ENCODE measurements at regions of chr1 and their contacts with region 1.

Region 1: DNA sequence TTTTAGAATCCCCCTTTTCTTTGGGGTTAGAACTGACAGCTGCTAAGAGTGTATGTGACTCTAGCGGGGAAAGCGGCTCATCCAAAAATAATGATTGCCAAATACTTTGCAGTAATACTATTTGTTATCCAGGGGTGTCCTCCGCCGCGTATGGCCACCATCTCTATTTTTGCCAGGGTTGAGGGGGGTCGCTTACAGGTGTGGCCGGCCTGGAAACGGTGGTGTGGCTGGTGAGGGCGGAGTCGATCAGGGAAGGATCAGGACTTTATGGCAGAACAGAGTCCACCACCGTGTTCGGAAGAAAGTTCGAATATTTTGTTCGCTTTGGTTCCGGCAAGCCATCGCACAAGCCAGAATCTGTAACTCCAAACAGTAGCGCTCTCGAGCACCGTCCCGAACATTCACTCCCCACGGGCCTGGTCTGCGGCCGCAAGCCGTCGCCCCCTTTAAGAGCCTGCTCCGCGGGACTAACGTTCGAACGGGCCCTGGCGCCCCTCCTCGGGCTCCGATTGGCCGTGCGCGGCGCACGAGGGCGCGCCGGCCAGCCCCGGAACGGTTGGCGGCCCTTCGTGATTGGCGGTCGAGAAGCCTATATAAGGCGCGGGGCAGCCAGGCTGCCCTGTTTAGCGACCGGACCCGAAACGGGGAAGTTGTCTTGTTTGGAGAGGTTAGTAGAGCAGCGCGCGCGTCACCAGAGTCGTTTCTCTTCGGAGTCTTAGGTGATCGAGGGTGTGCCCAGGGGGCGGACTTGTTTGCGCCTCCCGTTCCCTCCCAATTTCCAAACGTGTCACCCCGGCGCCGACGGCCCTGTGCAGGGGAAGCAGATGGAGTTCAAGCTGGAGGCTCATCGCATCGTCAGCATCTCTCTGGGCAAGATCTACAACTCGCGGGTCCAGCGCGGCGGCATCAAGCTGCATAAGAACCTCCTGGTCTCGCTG is at the start of gene IER5:
- DNase-seq: peak; percentile 89 to 98 (median 93)
- H3K4me3 ChIP-seq: peak within 1 kb of the TSS; percentile 88
- H3K4me3 Mint-ChIP-seq: peak within 1 kb of the TSS; percentile 96 to 100 (median 99)
- H3K27ac ChIP-seq: peak within 1 kb of the TSS; percentile 99
- H3K27ac Mint-ChIP-seq: peak within 1 kb of the TSS; percentile 98 to 100 (median 99)
- H3K4me1 ChIP-seq: peaks cover 27% of the 10 kb centered on the region
- H3K4me1 Mint-ChIP-seq: peaks cover 32 to 45% (median 43%) of the 10 kb centered on the region in 3 donors
- H3K27me3 ChIP-seq: no peaks in the 10 kb centered on the region
- H3K27me3 Mint-ChIP-seq: peaks cover 0 to 6% of the 10 kb centered on the region in 2 donors
- total RNA-seq, gene IER5: 52.3 to 57.2 TPM

Region 2: DNA sequence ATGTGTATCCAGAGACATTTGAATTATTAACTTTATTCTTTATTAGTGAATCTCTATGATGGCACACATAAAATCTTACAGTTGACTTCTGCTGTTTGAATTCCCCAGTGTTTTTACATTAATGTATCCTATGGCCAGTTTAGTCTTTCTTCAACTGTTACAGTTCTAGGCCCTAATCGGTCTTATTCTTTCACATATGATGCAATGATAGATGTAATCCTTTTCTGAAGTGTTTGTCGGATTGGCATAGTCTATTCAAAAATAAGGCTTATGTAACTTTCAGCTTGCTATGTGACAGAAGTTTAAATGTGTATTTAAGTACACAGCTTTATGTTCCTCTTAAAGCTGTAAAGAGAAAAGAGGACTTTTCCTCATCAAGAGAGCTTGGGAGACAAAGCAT is 202.0 kb before region 1 on chr1:
- CTCF ChIA-PET with region 1: no interaction called
- POLR2A ChIA-PET with region 1: interaction called, 12 read pairs
- DNase-seq: no peak
- H3K4me3 ChIP-seq: no peak overlapping the region
- H3K4me3 Mint-ChIP-seq: no peak overlapping the region
- H3K27ac ChIP-seq: no peak overlapping the region
- H3K27ac Mint-ChIP-seq: no peak overlapping the region
- H3K4me1 ChIP-seq: no peaks in the 10 kb centered on the region
- H3K4me1 Mint-ChIP-seq: no peaks in the 10 kb centered on the region
- H3K27me3 ChIP-seq: no peaks in the 10 kb centered on the region
- H3K27me3 Mint-ChIP-seq: no peaks in the 10 kb centered on the region

Region 3: GRCh38 chr1:181033799-181034451 is 54.4 kb before region 1 on chr1 and contains the start of gene MR1:
- CTCF ChIA-PET with region 1: interaction called, 7 read pairs
- POLR2A ChIA-PET with region 1: interaction called, 13 read pairs
- DNase-seq: peak; percentile 2 to 87 (median 66)
- H3K4me3 ChIP-seq: peak within 1 kb of the TSS; percentile 81
- H3K4me3 Mint-ChIP-seq: peak within 1 kb of the TSS; percentile 90 to 99 (median 97)
- H3K27ac ChIP-seq: peak within 1 kb of the TSS; percentile 87
- H3K27ac Mint-ChIP-seq: peak within 1 kb of the TSS; percentile 97 to 100 (median 99)
- H3K4me1 ChIP-seq: peaks cover 53% of the 10 kb centered on the region
- H3K4me1 Mint-ChIP-seq: peaks cover 50 to 65% (median 65%) of the 10 kb centered on the region in 3 donors
- H3K27me3 ChIP-seq: no peaks in the 10 kb centered on the region
- H3K27me3 Mint-ChIP-seq: no peaks in the 10 kb centered on the region
- total RNA-seq, gene MR1: 13.8 to 16.4 TPM

Region 4: GRCh38 chr1:181099152-181100014 is 11.0 kb after region 1 on chr1:
- CTCF ChIA-PET with region 1: interaction called, 39 read pairs
- POLR2A ChIA-PET with region 1: interaction called, 111 read pairs
- DNase-seq: no peak
- H3K4me3 ChIP-seq: no peak overlapping the region
- H3K4me3 Mint-ChIP-seq: peak overlapping the region in 2 of 7 donors; percentile 1 to 12
- H3K27ac ChIP-seq: no peak overlapping the region
- H3K27ac Mint-ChIP-seq: peak overlapping the region; percentile 3 to 62 (median 36)
- H3K4me1 ChIP-seq: peaks cover 33% of the 10 kb centered on the region
- H3K4me1 Mint-ChIP-seq: peaks cover 30 to 54% (median 41%) of the 10 kb centered on the region in 3 donors
- H3K27me3 ChIP-seq: no peaks in the 10 kb centered on the region
- H3K27me3 Mint-ChIP-seq: no peaks in the 10 kb centered on the region

Region 5: GRCh38 chr1:181105134-181106021 is 17.0 kb after region 1 on chr1:
- CTCF ChIA-PET with region 1: interaction called, 39 read pairs
- POLR2A ChIA-PET with region 1: interaction called, 111 read pairs
- DNase-seq: peak; percentile 86 to 97 (median 92)
- H3K4me3 ChIP-seq: peak overlapping the region; percentile 52
- H3K4me3 Mint-ChIP-seq: peak overlapping the region; percentile 84 to 93 (median 89)
- H3K27ac ChIP-seq: peak overlapping the region; percentile 82
- H3K27ac Mint-ChIP-seq: peak overlapping the region; percentile 92 to 99 (median 96)
- H3K4me1 ChIP-seq: peaks cover 39% of the 10 kb centered on the region
- H3K4me1 Mint-ChIP-seq: peaks cover 26 to 46% (median 41%) of the 10 kb centered on the region in 3 donors
- H3K27me3 ChIP-seq: no peaks in the 10 kb centered on the region
- H3K27me3 Mint-ChIP-seq: peaks cover 4 to 7% of the 10 kb centered on the region in 2 donors

Region 6: DNA sequence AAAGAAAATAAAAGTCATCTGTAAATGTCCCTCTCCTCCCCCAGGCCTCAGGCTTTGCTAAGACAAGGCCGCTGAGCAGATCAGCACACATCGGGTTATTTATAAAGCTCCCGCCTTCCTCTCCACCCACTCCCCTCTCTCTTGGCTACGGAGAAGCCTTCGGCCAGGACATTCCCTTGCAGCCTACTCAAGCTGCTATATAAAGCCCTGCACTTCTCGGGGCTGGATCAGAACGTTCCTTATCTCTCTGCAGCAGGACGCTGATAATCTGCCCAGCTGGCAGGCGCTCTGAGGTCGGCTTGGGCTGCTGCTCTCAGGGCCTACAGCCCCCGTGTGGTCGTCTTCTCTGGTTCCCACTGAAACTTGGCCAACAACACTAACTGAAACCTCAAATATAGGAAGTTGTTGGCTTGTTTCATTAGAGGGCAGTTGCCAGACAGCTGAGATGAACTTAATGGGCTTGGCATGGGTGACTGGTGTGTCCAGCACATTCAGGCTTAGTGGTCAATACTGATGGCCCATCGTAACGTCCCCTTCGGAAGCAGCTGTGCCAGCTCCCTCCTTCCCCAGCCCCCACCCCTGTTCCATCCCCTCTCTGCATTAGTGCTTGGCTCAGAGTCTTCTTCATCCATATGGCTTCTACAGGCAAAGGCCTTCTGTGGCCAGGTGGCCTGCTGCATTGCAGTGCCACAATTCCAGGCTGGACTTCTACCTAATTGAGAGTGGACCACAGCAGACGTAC is 64.7 kb after region 1 on chr1:
- CTCF ChIA-PET with region 1: interaction called, 15 read pairs
- POLR2A ChIA-PET with region 1: interaction called, 11 read pairs
- DNase-seq: no peak
- H3K4me3 ChIP-seq: no peak overlapping the region
- H3K4me3 Mint-ChIP-seq: no peak overlapping the region
- H3K27ac ChIP-seq: peak overlapping the region; percentile 44
- H3K27ac Mint-ChIP-seq: no peak overlapping the region
- H3K4me1 ChIP-seq: peaks cover 56% of the 10 kb centered on the region
- H3K4me1 Mint-ChIP-seq: peaks cover 43 to 59% (median 52%) of the 10 kb centered on the region in 3 donors
- H3K27me3 ChIP-seq: no peaks in the 10 kb centered on the region
- H3K27me3 Mint-ChIP-seq: no peaks in the 10 kb centered on the region

Region 7: DNA sequence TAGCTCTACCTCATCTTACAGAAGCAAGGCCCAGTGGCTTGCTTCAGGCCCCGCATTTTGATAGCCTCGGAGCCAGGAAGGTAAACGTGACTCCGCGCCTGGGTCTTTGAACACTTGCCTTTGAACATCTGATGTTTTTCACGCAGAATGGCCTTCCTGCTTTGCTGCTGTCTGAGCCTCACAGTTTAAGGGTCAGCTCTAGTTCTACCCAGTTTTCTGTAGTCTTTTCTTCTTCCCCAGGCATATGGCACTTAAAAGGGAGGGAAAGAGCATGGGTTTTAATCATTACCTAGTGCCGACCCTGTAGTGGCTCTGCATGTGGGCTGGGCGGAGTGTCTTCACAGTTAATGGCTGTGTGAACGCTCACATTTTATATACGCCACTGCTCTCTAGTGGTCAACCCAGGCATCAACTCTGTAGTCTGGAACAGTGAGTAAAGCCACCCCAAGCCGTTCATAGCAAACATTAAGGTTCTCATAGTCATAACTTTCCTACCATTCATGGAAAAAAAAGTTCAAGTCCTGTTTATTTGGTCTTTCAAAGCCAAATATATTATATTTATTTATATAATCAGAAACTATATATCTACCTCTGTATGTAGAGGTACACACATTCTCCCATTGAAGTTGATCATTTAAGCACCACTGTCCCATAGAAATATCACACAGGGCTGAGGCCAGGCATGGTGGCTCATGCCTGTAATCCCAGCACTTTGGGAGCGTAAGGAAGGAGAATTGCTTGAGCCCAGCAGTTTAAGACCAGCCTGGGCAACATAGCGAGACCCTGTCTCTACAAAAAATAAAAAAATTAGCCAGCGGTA is 78.2 kb after region 1 on chr1:
- CTCF ChIA-PET with region 1: interaction called, 42 read pairs
- POLR2A ChIA-PET with region 1: interaction called, 3 read pairs
- DNase-seq: peak; percentile 46 to 79 (median 68)
- H3K4me3 ChIP-seq: peak overlapping the region; percentile 16
- H3K4me3 Mint-ChIP-seq: peak overlapping the region in 5 of 7 donors; percentile 55 to 69 (median 58)
- H3K27ac ChIP-seq: no peak overlapping the region
- H3K27ac Mint-ChIP-seq: peak overlapping the region in 5 of 8 donors; percentile 3 to 80 (median 50)
- H3K4me1 ChIP-seq: peaks cover 7% of the 10 kb centered on the region
- H3K4me1 Mint-ChIP-seq: peaks cover 5 to 6% (median 5%) of the 10 kb centered on the region in 3 donors
- H3K27me3 ChIP-seq: no peaks in the 10 kb centered on the region
- H3K27me3 Mint-ChIP-seq: no peaks in the 10 kb centered on the region